Activated CD4-positive, alpha-beta T cell treated with anti-CD3 and anti-CD28 coated beads, Interleukin-2, amount 10 ng/mL, durations not matched to agents 7 days and 5 days (primary cell): ENCODE measurements at regions of chr20 and their contacts with region 1.

Region 1: GRCh38 chr20:47379433-47380150 is 23.1 kb upstream of the ZMYND8 start:
- DNase-seq: no peak
- H3K4me3 Mint-ChIP-seq: no peak overlapping the region
- H3K27ac Mint-ChIP-seq: no peak overlapping the region
- H3K4me1 Mint-ChIP-seq: peaks cover 27% of the 10 kb centered on the region
- H3K27me3 Mint-ChIP-seq: peaks cover 2% of the 10 kb centered on the region

Region 2: GRCh38 chr20:47205577-47206498 is 173.8 kb before region 1 on chr20:
- CTCF ChIA-PET with region 1: interaction called, 32 read pairs
- POLR2A ChIA-PET with region 1: no interaction called
- DNase-seq: peak; percentile 66
- H3K4me3 Mint-ChIP-seq: no peak overlapping the region
- H3K27ac Mint-ChIP-seq: no peak overlapping the region
- H3K4me1 Mint-ChIP-seq: peaks cover 5% of the 10 kb centered on the region
- H3K27me3 Mint-ChIP-seq: no peaks in the 10 kb centered on the region

Region 3: DNA sequence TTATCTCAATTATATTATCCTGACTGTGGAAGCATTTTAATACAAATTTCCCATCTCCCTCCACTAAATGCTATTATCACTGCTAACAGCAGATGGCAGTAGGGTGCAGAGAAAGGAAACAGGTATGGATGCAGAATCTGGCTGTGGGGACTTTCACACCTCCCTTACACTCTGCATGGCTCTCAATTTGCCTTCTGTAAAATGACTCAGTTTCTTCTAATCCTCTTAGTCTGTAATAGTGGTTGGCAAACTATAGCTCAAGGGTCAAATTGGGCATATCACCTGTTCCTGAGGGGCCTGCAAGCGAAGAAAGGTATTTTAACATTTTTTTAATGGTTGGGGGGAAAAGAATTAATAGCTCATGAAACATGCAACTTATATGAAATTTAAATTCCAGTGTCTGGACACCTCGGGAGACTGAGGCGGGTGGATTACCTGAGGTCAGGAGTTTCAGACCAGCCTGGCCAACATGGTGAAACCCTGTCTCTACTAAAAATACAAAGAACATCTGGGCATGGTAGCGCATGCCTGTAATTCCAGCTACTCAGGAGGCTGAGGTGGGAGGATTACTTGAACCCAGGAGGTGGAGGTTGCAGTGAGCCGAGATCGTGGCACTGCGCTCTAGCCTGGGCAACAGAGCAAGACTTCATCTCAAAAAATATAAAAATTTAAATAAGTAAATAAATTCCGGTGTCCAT is 106.5 kb before region 1 on chr20:
- CTCF ChIA-PET with region 1: interaction called, 187 read pairs
- POLR2A ChIA-PET with region 1: interaction called, 4 read pairs
- DNase-seq: peak; percentile 71
- H3K4me3 Mint-ChIP-seq: no peak overlapping the region
- H3K27ac Mint-ChIP-seq: no peak overlapping the region
- H3K4me1 Mint-ChIP-seq: peaks cover 32% of the 10 kb centered on the region
- H3K27me3 Mint-ChIP-seq: no peaks in the 10 kb centered on the region

Region 4: DNA sequence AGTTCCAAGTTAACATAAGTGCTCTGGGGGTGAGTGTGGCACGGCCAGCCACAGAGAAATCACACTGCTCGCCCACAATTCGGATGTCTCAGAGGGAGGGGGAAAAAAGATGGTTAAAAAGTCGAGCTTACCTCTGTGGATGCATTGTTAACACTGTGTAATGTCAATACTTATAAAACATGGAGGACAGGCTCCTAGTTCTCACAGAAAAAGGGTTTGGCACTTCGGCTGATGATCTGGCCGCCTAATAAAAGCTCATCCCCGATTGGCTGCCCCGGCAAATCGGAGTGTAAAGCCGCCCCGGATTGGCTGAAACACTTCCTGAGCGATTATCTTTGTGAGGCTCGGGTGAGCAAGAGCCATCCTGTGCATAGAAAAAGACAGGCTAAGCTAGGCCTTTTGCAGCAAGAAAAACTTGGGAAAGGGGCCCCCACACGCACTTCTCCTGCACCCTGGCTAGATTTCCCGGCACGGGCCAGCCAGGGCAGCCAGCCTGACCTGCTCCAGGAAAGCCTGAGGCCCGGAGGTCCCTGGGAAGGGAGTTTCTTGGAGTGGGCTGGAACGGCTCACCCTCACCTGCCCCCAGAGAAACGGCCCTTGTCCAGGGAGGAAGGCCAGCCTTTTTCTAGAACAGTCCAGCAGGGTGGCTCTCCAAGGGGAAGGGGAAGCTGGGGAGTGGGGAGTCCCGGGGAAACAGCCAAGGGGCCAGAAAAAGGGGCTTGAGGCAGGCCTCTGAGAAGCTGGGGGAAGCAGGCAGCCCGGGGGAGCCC is 22.9 kb before region 1 on chr20 and contains the start of gene ZMYND8:
- CTCF ChIA-PET with region 1: interaction called, 81 read pairs
- POLR2A ChIA-PET with region 1: interaction called, 3 read pairs
- DNase-seq: peak; percentile 93
- H3K4me3 Mint-ChIP-seq: peak within 1 kb of the TSS; percentile 92
- H3K27ac Mint-ChIP-seq: peak within 1 kb of the TSS; percentile 99
- H3K4me1 Mint-ChIP-seq: peaks cover 63% of the 10 kb centered on the region
- H3K27me3 Mint-ChIP-seq: no peaks in the 10 kb centered on the region
- total RNA-seq, gene ZMYND8: 44.6 to 55.6 TPM

Region 5: DNA sequence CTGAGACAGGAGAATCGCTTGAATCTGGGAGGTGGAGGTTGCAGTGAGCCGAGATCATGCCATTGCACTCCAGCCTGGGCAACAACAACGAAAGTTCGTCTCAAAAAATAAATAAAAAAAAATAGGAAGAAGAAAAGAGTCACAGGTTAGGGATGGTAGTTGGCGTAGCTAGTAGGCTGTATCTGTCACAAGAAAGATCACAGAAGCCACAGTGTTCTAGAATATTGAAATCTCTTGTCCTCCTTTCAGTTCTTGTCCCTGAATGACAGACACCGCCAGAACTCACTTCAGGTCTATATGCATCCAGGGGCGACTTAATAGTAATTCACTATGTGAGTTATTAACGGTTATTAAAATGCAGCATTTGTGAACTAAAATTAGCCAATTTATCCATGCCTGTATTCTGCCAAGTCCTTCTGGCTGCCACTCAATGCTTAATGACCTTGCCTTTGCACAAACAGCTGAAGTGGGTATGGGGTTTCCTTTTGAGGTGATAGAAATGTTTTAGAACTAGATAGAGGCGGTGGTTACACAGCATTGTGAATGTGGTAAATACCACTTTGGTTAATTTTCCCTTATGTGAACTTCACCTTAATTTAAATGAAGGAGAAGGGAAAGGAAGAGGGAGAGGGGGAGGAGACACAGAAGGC is 18.2 kb after region 1 on chr20:
- CTCF ChIA-PET with region 1: interaction called, 21 read pairs
- POLR2A ChIA-PET with region 1: no interaction called
- DNase-seq: no peak
- H3K4me3 Mint-ChIP-seq: no peak overlapping the region
- H3K27ac Mint-ChIP-seq: peak overlapping the region; percentile 39
- H3K4me1 Mint-ChIP-seq: peaks cover 15% of the 10 kb centered on the region
- H3K27me3 Mint-ChIP-seq: no peaks in the 10 kb centered on the region

Region 6: DNA sequence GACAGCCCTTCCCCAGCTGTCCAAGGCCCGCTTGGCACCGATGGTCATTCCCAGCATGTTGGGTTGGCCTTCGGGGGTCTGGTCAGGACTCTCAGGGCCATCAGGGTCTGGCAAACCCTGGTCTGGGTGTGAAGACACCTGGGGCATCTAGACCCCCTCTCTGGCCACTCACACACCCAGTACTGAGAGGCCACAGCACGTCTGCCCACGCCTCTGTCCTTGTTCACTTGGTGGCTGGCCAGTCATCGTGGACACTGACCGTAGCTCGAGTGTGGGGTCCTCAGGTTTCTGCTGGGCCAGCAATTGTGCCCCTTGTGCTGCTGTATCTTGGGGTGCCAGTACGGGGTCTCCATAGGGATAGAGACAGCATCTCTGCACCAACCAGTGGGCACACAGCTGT is 459.6 kb after region 1 on chr20:
- CTCF ChIA-PET with region 1: no interaction called
- POLR2A ChIA-PET with region 1: no interaction called
- DNase-seq: no peak
- H3K4me3 Mint-ChIP-seq: no peak overlapping the region
- H3K27ac Mint-ChIP-seq: no peak overlapping the region
- H3K4me1 Mint-ChIP-seq: peaks cover 3% of the 10 kb centered on the region
- H3K27me3 Mint-ChIP-seq: peaks cover 2% of the 10 kb centered on the region